Sciatic nerve (tissue), 2 donors: ENCODE measurements at regions of chr6 and their contacts with region 1.

Region 1: GRCh38 chr6:156776840-156777576 is at the start of gene ARID1B:
- DNase-seq: peak; percentile 90
- ATAC-seq: peak; percentile 73
- total RNA-seq, gene ARID1B: 142 TPM

Region 2: DNA sequence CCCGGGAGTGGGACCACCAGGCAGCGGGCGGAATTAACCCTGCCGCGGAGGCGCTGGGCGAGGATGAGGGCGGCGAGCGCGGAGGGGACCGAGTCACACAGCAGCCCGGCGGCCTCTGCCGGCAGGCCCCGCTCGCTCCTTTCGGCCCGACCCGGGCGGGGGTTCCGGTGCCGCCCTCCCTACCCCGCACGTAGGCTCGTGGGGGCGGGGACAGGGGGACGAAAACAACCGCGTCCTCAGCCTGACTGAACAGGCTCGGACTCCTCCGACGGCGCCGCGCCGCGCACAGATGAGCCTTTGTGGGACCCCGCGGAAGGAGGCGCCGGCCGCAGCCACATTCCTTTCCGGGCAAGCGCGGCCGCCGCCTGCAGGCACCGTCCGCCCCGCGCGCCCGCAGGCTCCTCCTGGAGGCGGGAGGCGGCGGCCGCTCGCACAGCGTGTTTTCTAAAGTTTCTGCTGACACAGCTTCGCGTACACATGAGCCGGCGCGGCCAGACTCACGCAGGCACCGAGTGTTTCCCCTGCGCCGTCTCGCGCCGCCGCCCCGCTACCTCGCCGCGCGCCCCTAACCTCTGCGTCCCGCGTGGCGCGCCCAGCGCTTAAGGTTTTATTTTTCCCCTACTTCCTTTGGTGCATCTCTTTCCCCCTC is 244.5 kb after region 1 on chr6:
- intact Hi-C with region 1: loop called (anchors 10 kb)
- DNase-seq: peak; percentile 96
- ATAC-seq: peak; percentile 96

Region 3: GRCh38 chr6:157304899-157305663 is 528.1 kb after region 1 on chr6:
- intact Hi-C with region 1: no loop called
- DNase-seq: no peak
- ATAC-seq: peak; percentile 49